Colonic mucosa (tissue), 4 donors: ENCODE measurements at regions of chr10 and their contacts with region 1.

Region 1: GRCh38 chr10:63257778-63258177 is 124.7 kb downstream of the NRBF2 start:
- DNase-seq: no peak
- H3K4me3 ChIP-seq: no peak overlapping the region
- H3K27ac ChIP-seq: no peak overlapping the region
- H3K4me1 ChIP-seq: peaks cover 18% of the 10 kb centered on the region
- H3K27me3 ChIP-seq: no peaks in the 10 kb centered on the region
- CTCF ChIP-seq: no peak

Region 2: GRCh38 chr10:63241841-63242281 is 15.9 kb before region 1 on chr10:
- intact Hi-C with region 1: loop called (anchors 1 kb)
- DNase-seq: no peak
- H3K4me3 ChIP-seq: no peak overlapping the region
- H3K27ac ChIP-seq: no peak overlapping the region
- H3K4me1 ChIP-seq: peaks cover 7% of the 10 kb centered on the region
- H3K27me3 ChIP-seq: no peaks in the 10 kb centered on the region
- CTCF ChIP-seq: no peak